ENCODE measurements at regions of chr4 and their contacts with region 1.

Region 1: GRCh38 chr4:102449751-102450352 is 51.3 kb upstream of the NFKB1 start:
- DNase-seq: peak; percentile 46
- H3K4me3 ChIP-seq: no peak overlapping the region
- H3K27ac ChIP-seq: no peak overlapping the region
- H3K4me1 ChIP-seq: peaks cover under 1 to 4% (median 3%) of the 10 kb centered on the region in 4 donors
- H3K27me3 ChIP-seq: no peaks in the 10 kb centered on the region
- CTCF ChIP-seq: peak; percentile 55 to 69 (median 63)
- EP300 ChIP-seq: no peak
- POLR2A ChIP-seq: no peak

Region 2: GRCh38 chr4:102420569-102421221 is 29.2 kb before region 1 on chr4:
- in situ Hi-C with region 1: no loop called
- intact Hi-C with region 1: no loop called
- DNase-seq: no peak
- H3K4me3 ChIP-seq: no peak overlapping the region
- H3K27ac ChIP-seq: no peak overlapping the region
- H3K4me1 ChIP-seq: peaks cover 0 to 7% (median 0%) of the 10 kb centered on the region in 4 donors
- H3K27me3 ChIP-seq: no peaks in the 10 kb centered on the region
- CTCF ChIP-seq: no peak
- EP300 ChIP-seq: no peak
- POLR2A ChIP-seq: no peak

Region 3: GRCh38 chr4:102500696-102501446 is 51.0 kb after region 1 on chr4 and contains the start of gene NFKB1:
- in situ Hi-C with region 1: no loop called
- intact Hi-C with region 1: loop called (anchors 10 kb)
- DNase-seq: peak; percentile 73
- H3K4me3 ChIP-seq: peak within 1 kb of the TSS; percentile 77 to 95 (median 78)
- H3K27ac ChIP-seq: peak within 1 kb of the TSS; percentile 93 to 99 (median 98)
- H3K4me1 ChIP-seq: peaks cover 21 to 47% (median 32%) of the 10 kb centered on the region in 4 donors
- H3K27me3 ChIP-seq: no peaks in the 10 kb centered on the region
- CTCF ChIP-seq: peak in 2 of 5 experiments; percentile 3 to 5
- EP300 ChIP-seq: no peak
- POLR2A ChIP-seq: peak; percentile 19
- total RNA-seq, gene NFKB1: 20.9 to 35.8 (median 25.2) TPM

Region 4: GRCh38 chr4:102610007-102610406 is 160.2 kb after region 1 on chr4:
- in situ Hi-C with region 1: loop called in 2 of 4 experiments (anchors 10 to 25 kb)
- intact Hi-C with region 1: no loop called
- DNase-seq: no peak
- H3K4me3 ChIP-seq: no peak overlapping the region
- H3K27ac ChIP-seq: no peak overlapping the region
- H3K4me1 ChIP-seq: peaks cover 0 to 5% (median 2%) of the 10 kb centered on the region in 4 donors
- H3K27me3 ChIP-seq: no peaks in the 10 kb centered on the region
- CTCF ChIP-seq: peak in 1 of 5 experiments; percentile 5
- EP300 ChIP-seq: no peak
- POLR2A ChIP-seq: no peak

Region 5: DNA sequence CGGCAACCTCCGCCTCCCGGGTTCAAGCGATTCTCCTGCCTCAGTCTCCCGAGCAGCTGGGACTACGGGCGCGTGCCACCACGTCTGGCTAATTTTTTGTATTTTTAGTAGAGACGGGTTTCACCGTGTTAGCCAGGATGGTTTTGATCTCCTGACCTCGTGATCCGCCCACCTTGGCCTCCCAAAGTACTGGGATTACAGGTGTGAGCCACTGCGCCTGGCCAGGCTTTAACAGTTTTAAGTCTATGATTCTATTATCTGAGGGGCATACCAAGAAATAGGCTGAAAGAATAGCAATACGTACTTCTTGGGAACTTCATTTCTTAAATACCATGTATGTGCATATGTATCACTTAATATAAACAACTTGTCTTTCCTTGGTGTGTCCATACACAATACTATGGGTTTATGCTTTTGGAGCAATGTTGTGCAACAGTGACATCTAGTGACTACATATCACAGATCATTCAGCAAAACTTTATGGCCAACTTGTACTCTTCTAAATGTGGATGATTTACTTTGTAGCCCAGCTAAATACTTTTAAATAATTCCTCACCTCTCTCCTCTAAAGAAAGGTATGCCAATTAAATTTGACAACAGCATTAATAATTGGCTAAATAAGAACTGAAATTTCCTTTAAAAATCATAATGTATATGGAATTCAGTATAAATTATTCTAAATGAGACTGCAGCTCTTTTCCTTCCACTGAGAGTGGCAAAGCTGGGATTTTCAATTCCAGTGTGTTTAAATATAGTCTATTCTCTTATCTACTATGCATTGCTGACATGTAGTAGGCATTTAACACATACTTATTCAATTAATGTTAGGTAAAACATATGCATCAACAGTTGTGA is 559.2 kb after region 1 on chr4:
- in situ Hi-C with region 1: loop called in 2 of 4 experiments (anchors 5 to 10 kb)
- intact Hi-C with region 1: loop called (anchors 5 kb)
- DNase-seq: no peak
- H3K4me3 ChIP-seq: no peak overlapping the region
- H3K27ac ChIP-seq: no peak overlapping the region
- H3K4me1 ChIP-seq: peaks cover 5 to 24% (median 19%) of the 10 kb centered on the region in 4 donors
- H3K27me3 ChIP-seq: no peaks in the 10 kb centered on the region
- CTCF ChIP-seq: peak; percentile 57 to 66 (median 64)
- EP300 ChIP-seq: no peak
- POLR2A ChIP-seq: no peak

Region 6: DNA sequence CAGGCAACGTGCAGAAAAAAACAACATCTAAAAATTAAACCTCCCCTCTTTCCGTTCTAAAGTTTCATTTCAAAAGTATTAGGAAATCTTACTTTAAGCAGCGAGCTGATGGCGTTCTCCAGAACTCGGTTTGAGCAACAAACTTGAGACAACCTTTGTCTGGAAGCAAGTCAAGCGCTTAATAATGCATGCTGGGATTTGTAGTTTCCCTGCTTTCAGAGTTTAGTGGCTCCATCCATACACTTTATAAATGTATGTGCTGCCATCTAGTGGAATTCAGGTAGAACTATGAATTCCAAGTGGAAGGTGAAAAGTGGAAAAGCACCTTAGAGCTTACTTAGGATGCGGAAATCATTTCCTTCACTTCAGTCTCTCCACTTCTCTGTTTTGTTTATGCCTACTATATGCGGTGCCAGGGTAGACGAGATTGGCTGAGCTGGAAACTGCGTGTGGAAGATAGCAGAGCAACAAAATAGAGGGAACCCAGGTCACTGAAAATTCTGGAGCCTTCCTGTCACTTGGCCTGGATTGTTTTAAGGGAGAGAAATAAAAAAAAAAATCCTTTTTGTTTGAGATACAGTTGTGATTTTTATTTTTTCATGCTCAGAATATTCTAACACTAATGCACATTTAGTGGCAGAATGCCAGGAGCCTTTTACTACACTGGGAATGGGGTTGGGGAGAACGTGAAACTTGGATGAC is 650.0 kb after region 1 on chr4 and contains the start of gene BDH2:
- in situ Hi-C with region 1: loop called in 1 of 4 experiments (anchors 10 kb)
- intact Hi-C with region 1: no loop called
- DNase-seq: peak; percentile 48
- H3K4me3 ChIP-seq: peak within 1 kb of the TSS; percentile 36 to 59 (median 48)
- H3K27ac ChIP-seq: peak within 1 kb of the TSS; percentile 63 to 84 (median 73)
- H3K4me1 ChIP-seq: peaks cover 6 to 25% (median 14%) of the 10 kb centered on the region in 4 donors
- H3K27me3 ChIP-seq: no peaks in the 10 kb centered on the region
- CTCF ChIP-seq: peak; percentile 73 to 88 (median 78)
- EP300 ChIP-seq: no peak
- POLR2A ChIP-seq: peak; percentile 39
- total RNA-seq, gene BDH2: 13.8 to 54.0 (median 31.9) TPM

Measured in transverse colon (tissue), 4 donors.